Left colon (tissue), 2 donors: ENCODE measurements at regions of chr2 and their contacts with region 1.

Region 1: GRCh38 chr2:46461011-46461674 is 18.2 kb upstream of the TMEM247 start:
- DNase-seq: peak in 1 of 2 donors; percentile 83
- ATAC-seq: peak; percentile 73

Region 2: DNA sequence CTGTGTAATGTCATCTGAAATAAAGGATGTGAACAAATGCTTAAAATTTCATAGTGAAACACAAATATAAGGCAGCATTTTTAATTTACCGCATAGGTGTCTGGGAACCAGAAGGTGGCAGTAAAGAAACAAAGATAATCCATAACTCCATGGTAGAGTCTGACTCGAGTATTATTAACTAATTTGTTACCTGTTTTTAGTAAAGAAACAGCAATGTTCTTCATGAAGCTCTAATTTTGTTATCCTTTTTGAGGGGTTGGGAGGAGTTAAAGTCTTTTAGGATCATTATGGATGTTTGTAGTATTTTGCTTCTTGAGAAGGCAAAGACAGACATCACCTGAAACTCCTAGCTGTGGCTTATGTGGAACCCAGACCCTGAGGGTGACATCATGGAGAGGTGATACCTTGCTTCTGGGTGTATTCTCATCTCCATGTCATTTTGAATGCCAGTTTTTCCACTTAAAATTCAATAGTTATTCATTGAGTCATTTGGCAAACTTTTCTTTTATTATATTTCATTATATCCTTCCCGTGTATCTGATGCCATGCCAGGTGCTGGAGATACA is 450.1 kb before region 1 on chr2:
- intact Hi-C with region 1: loop called in 1 of 2 experiments (anchors 2 kb)
- DNase-seq: no peak
- ATAC-seq: peak; percentile 43

Region 3: GRCh38 chr2:46062637-46063412 is 398.3 kb before region 1 on chr2:
- intact Hi-C with region 1: loop called in 1 of 2 experiments (anchors 2 kb)
- DNase-seq: peak; percentile 70 to 80
- ATAC-seq: peak; percentile 67

Region 4: GRCh38 chr2:46632349-46632748 is 171.2 kb after region 1 on chr2:
- intact Hi-C with region 1: no loop called
- DNase-seq: no peak
- ATAC-seq: peak; percentile 61